Dendritic cell treated with granulocyte-macrophage colony-stimulating factor and Interleukin-4, amounts not matched to agents 40 ng/mL and 50 ng/mL, for 4 days (primary cell): ENCODE measurements at regions of chr7 and their contacts with region 1.

Region 1: GRCh38 chr7:50092579-50093491 is at the start of gene ZPBP:
- H3K4me3 Mint-ChIP-seq: peak within 1 kb of the TSS; percentile 65
- H3K27ac Mint-ChIP-seq: no peak within 1 kb of the TSS
- H3K4me1 Mint-ChIP-seq: peaks cover 9% of the 10 kb centered on the region
- H3K27me3 Mint-ChIP-seq: peaks cover 11% of the 10 kb centered on the region

Region 2: GRCh38 chr7:50632561-50633413 is 540.0 kb after region 1 on chr7:
- intact Hi-C with region 1: loop called (anchors 2 kb)
- H3K4me3 Mint-ChIP-seq: no peak overlapping the region
- H3K27ac Mint-ChIP-seq: no peak overlapping the region
- H3K4me1 Mint-ChIP-seq: no peaks in the 10 kb centered on the region
- H3K27me3 Mint-ChIP-seq: no peaks in the 10 kb centered on the region

Region 3: DNA sequence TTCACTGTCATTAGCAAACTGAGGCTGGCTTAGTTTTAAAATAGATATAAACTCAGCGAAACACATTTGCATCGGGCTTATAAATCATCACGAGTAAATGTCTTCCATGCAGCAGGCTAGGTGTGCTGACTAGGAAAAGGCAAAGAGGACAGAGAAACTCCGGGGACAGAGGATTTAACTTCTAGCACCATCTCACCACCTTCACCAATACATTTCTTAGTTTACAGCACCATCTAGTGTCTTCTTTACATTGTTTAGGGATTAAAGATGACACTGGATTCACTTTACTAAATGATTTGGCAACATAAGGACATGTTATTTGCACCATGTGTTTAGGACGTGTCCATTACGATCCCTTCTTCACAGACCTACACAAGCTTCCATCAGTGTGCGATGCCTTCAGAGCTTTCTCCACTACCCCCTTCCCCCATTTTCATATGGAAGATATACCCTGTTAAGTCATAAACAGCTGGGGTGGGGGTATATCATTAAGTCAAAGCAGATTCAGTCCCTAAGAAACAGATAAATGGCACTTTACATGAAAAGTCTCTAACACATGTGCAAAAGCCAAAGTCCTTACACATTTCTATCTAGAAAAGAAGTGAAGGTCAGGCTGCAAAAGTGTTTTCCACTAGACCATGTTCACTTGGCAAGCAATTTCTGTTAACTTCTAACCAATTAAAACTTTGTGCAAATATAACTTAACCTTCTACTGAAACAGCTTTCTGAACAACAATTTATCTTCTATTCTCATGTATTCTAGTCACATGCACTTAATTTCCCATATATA is 586.6 kb after region 1 on chr7:
- intact Hi-C with region 1: loop called (anchors 5 kb)
- H3K4me3 Mint-ChIP-seq: no peak overlapping the region
- H3K27ac Mint-ChIP-seq: no peak overlapping the region
- H3K4me1 Mint-ChIP-seq: peaks cover 9% of the 10 kb centered on the region
- H3K27me3 Mint-ChIP-seq: no peaks in the 10 kb centered on the region

Region 4: GRCh38 chr7:51067757-51068156 is 974.9 kb after region 1 on chr7:
- intact Hi-C with region 1: loop called (anchors 2 kb)
- H3K4me3 Mint-ChIP-seq: no peak overlapping the region
- H3K27ac Mint-ChIP-seq: no peak overlapping the region
- H3K4me1 Mint-ChIP-seq: no peaks in the 10 kb centered on the region
- H3K27me3 Mint-ChIP-seq: no peaks in the 10 kb centered on the region